ENCODE measurements at regions of chr11 and their contacts with region 1.

Region 1: DNA sequence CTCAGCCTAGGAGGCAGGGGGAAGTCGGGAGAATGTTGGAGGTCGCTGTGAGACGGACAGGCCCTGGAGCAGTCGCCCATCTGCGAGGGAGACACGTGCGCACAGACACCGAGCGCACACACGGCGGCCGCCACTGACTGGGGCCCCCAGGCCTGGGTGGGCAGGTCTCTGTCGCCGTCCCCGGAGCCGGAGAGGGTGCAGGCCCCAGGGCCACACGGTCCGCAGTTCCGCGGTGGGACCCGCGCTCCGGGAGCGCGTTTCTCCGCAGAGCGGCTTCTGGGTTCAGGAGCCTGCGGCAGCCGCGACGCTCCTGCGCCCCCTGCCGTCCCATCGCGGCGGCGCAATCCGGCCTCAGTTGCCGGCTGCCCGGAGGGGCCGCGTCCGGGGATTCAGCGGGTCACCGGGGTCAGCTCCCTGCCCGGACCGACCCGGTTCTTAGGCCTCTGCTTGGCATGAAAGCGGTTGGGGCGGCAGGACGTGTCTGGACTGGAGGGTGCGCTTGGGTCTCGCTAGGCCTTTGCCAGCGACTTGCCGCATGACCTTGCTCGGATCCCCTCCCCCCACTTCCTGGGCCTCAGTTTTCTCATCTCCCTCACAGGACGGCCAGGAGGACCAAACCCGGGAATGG is 31.2 kb downstream of the PDE2A start:
- DNase-seq: peak; percentile 56 to 92 (median 64)
- ATAC-seq: peak; percentile 92
- H3K4me3 ChIP-seq: peak overlapping the region; percentile 33 to 42
- H3K27ac ChIP-seq: no peak overlapping the region
- H3K4me1 ChIP-seq: peaks cover 7 to 21% of the 10 kb centered on the region in 2 donors
- H3K27me3 ChIP-seq: peaks cover 11 to 60% of the 10 kb centered on the region in 2 donors
- CTCF ChIP-seq: peak; percentile 94 to 95

Region 2: DNA sequence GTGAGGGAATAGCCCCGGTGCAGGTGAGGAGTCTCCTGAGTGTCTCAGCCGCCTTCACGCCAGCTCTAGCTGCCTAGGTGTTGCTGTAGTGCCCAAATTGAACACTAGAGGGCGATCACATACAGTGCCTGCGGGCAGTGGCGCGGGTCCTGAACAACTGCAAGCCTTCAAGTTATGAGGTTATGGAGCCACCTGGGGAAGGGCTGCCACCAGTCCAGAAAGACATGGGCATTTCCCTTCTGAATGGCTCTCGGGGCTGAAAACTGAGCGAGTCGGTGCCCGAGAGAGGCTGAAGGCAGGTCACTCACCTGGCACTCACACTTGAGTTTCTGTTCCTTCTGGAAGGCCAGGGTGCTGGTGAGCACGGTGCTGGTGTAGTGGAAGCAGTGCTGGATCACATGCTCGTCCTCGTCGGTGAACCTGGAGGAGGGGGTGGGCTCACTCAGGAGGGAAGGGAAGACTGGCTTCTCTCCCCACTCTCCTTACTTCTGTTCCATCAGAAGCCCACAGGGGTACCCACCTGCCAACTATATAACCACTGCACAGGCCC is 57.2 kb before region 1 on chr11:
- intact Hi-C with region 1: loop called in 1 of 2 experiments (anchors 5 kb)
- DNase-seq: peak; percentile 51 to 83 (median 72)
- ATAC-seq: peak; percentile 84
- H3K4me3 ChIP-seq: no peak overlapping the region
- H3K27ac ChIP-seq: no peak overlapping the region
- H3K4me1 ChIP-seq: peaks cover 6 to 28% of the 10 kb centered on the region in 2 donors
- H3K27me3 ChIP-seq: peaks cover 27 to 79% of the 10 kb centered on the region in 2 donors
- CTCF ChIP-seq: peak; percentile 92 to 96

Region 3: GRCh38 chr11:72799441-72799840 is 156.4 kb after region 1 on chr11:
- intact Hi-C with region 1: no loop called
- DNase-seq: no peak
- ATAC-seq: no peak
- H3K4me3 ChIP-seq: no peak overlapping the region
- H3K27ac ChIP-seq: no peak overlapping the region
- H3K4me1 ChIP-seq: peaks cover 0 to 9% of the 10 kb centered on the region in 2 donors
- H3K27me3 ChIP-seq: no peaks in the 10 kb centered on the region
- CTCF ChIP-seq: no peak

Region 4: GRCh38 chr11:72996959-72997358 is 354.0 kb after region 1 on chr11:
- intact Hi-C with region 1: no loop called
- DNase-seq: no peak
- ATAC-seq: no peak
- H3K4me3 ChIP-seq: no peak overlapping the region
- H3K27ac ChIP-seq: peak overlapping the region in 1 of 2 donors; percentile 16
- H3K4me1 ChIP-seq: peaks cover 0 to 19% of the 10 kb centered on the region in 2 donors
- H3K27me3 ChIP-seq: no peaks in the 10 kb centered on the region
- CTCF ChIP-seq: no peak